ENCODE measurements at regions of chr17 and their contacts with region 1.

Region 1: GRCh38 chr17:70517816-70518215 is 348.5 kb downstream of the KCNJ2 start:
- DNase-seq: no peak
- H3K4me3 ChIP-seq: no peak overlapping the region
- H3K27ac ChIP-seq: no peak overlapping the region
- H3K27me3 ChIP-seq: no peaks in the 10 kb centered on the region
- CTCF ChIP-seq: no peak

Region 2: GRCh38 chr17:69630056-69630635 is 887.7 kb before region 1 on chr17:
- CTCF ChIA-PET with region 1: no interaction called
- POLR2A ChIA-PET with region 1: interaction called, 11 read pairs
- DNase-seq: no peak
- H3K4me3 ChIP-seq: no peak overlapping the region
- H3K27ac ChIP-seq: no peak overlapping the region
- H3K27me3 ChIP-seq: peaks cover 4% of the 10 kb centered on the region
- CTCF ChIP-seq: no peak

Region 3: GRCh38 chr17:70582777-70583176 is 65.0 kb after region 1 on chr17:
- CTCF ChIA-PET with region 1: no interaction called
- POLR2A ChIA-PET with region 1: no interaction called
- DNase-seq: no peak
- H3K4me3 ChIP-seq: no peak overlapping the region
- H3K27ac ChIP-seq: no peak overlapping the region
- H3K27me3 ChIP-seq: no peaks in the 10 kb centered on the region
- CTCF ChIP-seq: no peak